Breast epithelium (tissue), 4 donors: ENCODE measurements at regions of chr7 and their contacts with region 1.

Region 1: DNA sequence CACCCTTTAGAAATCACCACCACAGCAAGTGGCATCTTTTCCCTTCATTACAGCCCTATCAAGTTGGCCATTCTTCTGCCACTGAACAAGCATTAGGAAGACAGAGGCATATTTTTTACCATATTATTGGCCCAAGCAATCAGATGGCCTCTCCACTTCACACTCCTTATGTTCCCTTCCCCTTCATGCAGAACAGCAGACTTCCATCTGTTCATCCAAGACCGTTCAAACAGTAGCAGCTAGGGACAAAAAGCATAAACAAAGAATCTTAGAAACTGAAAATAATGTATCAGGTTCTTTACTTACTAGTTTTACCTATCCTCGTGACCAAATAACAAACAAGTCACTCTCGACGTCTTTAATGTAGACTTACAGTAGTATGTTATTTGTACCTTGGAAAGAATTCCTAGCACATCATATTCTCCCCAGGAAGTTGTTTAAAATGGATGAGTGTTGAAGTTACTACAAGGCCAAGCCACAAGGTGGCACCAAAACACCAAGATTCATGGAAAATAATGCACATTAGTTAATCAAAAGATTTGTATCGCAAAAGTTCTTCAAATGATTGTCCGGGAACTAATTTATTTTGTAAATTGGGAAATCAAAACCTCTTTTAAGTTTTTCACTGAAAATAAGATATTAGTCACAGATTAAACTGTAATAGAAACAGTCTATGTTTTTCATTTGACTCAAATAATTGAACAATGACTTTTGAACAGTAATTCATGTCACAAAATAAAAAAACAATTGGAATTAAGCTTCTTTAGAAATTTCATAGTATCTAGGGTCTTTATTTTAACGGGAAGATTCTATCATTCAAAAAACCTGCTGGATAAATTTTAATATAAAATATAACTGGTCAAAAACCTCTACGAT is 112.1 kb downstream of the VPS41 start:
- DNase-seq: peak in 1 of 2 donors; percentile 27
- H3K4me3 ChIP-seq: no peak overlapping the region
- H3K27ac ChIP-seq: no peak overlapping the region
- H3K4me1 ChIP-seq: no peaks in the 10 kb centered on the region
- H3K27me3 ChIP-seq: no peaks in the 10 kb centered on the region
- CTCF ChIP-seq: peak; percentile 41 to 84 (median 73)
- POLR2A ChIP-seq: no peak

Region 2: GRCh38 chr7:38411404-38411803 is 385.5 kb before region 1 on chr7:
- intact Hi-C with region 1: no loop called
- DNase-seq: no peak
- H3K4me3 ChIP-seq: no peak overlapping the region
- H3K27ac ChIP-seq: no peak overlapping the region
- H3K4me1 ChIP-seq: no peaks in the 10 kb centered on the region
- H3K27me3 ChIP-seq: no peaks in the 10 kb centered on the region
- CTCF ChIP-seq: no peak
- POLR2A ChIP-seq: no peak

Region 3: GRCh38 chr7:38751416-38751815 is 45.4 kb before region 1 on chr7:
- intact Hi-C with region 1: no loop called
- DNase-seq: no peak
- H3K4me3 ChIP-seq: no peak overlapping the region
- H3K27ac ChIP-seq: no peak overlapping the region
- H3K4me1 ChIP-seq: no peaks in the 10 kb centered on the region
- H3K27me3 ChIP-seq: no peaks in the 10 kb centered on the region
- CTCF ChIP-seq: no peak
- POLR2A ChIP-seq: no peak

Region 4: DNA sequence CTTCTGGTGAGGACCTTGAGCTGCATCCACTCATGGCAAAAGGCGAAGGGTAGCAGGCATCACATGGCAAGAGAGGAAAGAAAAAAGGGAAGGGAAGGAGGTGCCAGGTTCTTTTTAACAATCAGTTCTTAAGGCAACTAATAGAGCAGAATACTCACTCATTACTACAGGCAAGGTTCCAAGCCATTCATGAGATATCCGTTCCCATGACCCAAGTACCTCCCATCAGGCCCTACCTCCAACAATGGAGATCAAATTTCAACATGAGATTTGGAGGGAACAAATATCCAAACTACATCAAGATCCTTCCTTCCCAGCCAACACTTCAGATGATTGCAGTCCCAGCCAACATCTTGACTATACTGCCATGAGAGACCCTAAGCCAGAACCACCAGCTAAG is 730.4 kb after region 1 on chr7:
- intact Hi-C with region 1: loop called (anchors 10 kb)
- DNase-seq: no peak
- H3K4me3 ChIP-seq: no peak overlapping the region
- H3K27ac ChIP-seq: no peak overlapping the region
- H3K4me1 ChIP-seq: no peaks in the 10 kb centered on the region
- H3K27me3 ChIP-seq: no peaks in the 10 kb centered on the region
- CTCF ChIP-seq: no peak
- POLR2A ChIP-seq: no peak